AG04449 (cell line): ENCODE measurements at regions of chr2 and their contacts with region 1.

Region 1: GRCh38 chr2:205947621-205948495 is 138.1 kb downstream of the INO80D start:
- DNase-seq: peak; percentile 10
- H3K4me3 ChIP-seq: no peak overlapping the region
- CTCF ChIP-seq: peak; percentile 89

Region 2: GRCh38 chr2:204145263-204145751 is 1802.6 kb before region 1 on chr2:
- CTCF ChIA-PET with region 1: interaction called, 16 read pairs
- POLR2A ChIA-PET with region 1: no interaction called
- DNase-seq: peak; percentile 19
- H3K4me3 ChIP-seq: 0 out of 2 replicates have a peak overlapping the region, but pooled peaks have one; percentile 9
- CTCF ChIP-seq: peak; percentile 90

Region 3: DNA sequence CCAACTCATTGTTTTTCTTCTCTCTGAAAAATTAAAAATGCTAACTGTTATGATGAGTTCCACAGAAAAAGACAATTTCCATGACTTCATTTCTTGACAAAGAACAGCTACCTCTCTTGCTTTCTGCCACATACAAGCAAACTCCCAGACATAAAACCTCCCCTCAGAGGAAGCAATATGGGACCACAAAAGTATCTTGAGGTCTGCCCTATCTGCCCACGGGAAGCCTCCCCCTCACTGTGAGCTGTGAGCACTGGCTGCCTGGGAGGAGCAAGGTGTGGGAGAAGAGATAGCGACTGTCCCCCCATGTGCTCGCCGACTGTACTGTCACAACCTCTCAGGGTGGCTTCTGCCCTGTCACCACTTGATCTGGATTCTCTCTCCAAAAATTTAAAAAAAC is 335.2 kb before region 1 on chr2:
- CTCF ChIA-PET with region 1: no interaction called
- POLR2A ChIA-PET with region 1: no interaction called
- DNase-seq: no peak
- H3K4me3 ChIP-seq: no peak overlapping the region
- CTCF ChIP-seq: no peak

Region 4: DNA sequence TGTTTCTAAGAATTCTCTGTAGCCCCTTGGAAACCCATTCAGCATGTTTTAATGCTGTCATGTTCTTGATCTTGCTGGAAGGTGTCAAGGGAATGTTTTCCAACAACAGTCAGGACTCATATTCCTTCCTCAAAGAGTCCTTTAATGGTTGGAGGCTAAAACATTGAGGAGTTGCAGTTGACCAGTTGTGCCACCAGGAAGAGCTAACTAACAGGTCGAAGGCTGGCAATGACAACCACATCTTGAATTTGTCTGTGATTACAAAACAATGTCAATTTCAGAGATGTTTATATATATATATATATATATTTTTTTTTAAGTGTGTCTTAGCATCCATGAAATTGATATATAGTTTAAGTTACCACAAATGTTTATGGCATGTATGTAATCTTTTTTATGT is 13.4 kb before region 1 on chr2:
- CTCF ChIA-PET with region 1: interaction called, 82 read pairs
- POLR2A ChIA-PET with region 1: no interaction called
- DNase-seq: no peak
- H3K4me3 ChIP-seq: no peak overlapping the region
- CTCF ChIP-seq: peak; percentile 8

Region 5: DNA sequence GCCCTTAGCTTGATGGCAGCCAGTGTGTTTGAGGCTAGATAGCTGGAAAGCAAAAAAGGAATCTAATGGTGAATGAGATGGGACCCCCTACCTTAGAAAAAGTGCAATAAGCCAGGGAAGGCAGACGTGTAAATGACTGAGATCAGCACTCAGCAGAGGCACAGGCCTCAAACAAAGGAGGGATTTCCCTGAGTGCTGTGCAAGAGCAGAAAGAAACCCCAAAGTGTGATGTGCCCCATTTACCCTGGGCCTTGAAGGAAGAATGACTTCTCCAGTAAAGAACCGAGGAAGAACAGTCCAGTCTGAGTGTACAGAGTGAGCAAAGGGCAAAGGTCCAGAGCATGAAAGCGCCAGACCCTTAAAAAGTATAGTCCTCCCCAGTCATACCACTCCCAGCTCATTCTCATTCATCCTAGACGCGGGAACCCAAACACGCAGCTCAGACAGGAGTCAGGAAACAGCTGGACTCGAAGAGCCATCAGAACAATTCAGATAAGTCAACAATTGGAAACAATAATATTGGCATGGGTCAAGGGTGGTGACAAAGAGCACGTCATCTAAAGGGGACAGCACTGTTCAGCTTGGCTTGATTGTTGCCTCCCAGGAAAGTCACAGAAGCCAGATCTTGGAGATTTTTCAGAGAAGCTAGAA is 16.4 kb after region 1 on chr2:
- CTCF ChIA-PET with region 1: interaction called, 41 read pairs
- POLR2A ChIA-PET with region 1: interaction called, 3 read pairs
- DNase-seq: no peak
- H3K4me3 ChIP-seq: no peak overlapping the region
- CTCF ChIP-seq: no peak

Region 6: DNA sequence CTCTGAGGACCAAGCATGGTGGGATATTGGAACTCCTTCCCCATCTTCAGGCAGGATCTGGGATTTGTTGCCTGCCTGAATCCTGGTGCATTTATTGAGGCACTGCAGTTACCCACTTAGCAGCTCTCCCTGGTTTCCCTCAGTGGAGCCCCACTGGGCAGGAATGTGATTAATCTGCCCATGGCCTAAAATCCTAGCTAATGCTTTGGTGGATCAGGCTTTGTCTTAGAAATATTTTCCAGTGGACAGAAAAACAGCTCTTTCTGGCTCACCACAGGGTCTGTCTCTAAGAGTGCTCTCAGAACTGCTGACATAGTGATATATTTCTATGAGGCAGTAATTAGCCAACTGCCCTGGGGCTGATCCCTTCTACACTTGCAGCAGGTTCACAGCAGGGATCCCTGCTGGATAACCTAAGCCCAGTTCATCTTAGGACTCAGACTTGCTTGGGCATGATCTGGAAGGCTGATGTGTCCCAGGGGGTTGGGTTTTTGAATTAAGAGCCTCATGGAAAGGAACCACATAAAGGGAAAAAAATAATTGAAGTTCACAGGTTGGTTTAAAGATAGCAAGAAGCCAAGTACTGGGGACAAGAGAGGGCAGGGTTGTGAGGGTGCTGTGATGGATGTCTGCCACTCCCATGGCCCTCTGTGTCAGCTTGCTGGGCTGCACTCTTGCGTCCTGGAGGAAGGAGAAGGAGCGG is 282.4 kb after region 1 on chr2:
- CTCF ChIA-PET with region 1: no interaction called
- POLR2A ChIA-PET with region 1: no interaction called
- DNase-seq: no peak
- H3K4me3 ChIP-seq: no peak overlapping the region
- CTCF ChIP-seq: no peak